ENCODE measurements at regions of chr1 and their contacts with region 1.

Region 1: GRCh38 chr1:207885129-207886032 is 25.5 kb downstream of the CD34 start:
- DNase-seq: peak; percentile 86
- ATAC-seq: peak; percentile 72
- H3K4me3 Mint-ChIP-seq: no peak overlapping the region
- H3K27ac Mint-ChIP-seq: peak overlapping the region; percentile 95
- H3K4me1 Mint-ChIP-seq: peaks cover 30% of the 10 kb centered on the region
- H3K27me3 Mint-ChIP-seq: peaks cover 2% of the 10 kb centered on the region
- CTCF ChIP-seq: peak; percentile 98

Region 2: GRCh38 chr1:207811920-207812720 is 73.3 kb before region 1 on chr1:
- CTCF ChIA-PET with region 1: interaction called, 11 read pairs
- POLR2A ChIA-PET with region 1: no interaction called
- intact Hi-C with region 1: no loop called
- DNase-seq: no peak
- ATAC-seq: peak; percentile 57
- H3K4me3 Mint-ChIP-seq: no peak overlapping the region
- H3K27ac Mint-ChIP-seq: peak overlapping the region; percentile 67
- H3K4me1 Mint-ChIP-seq: peaks cover 60% of the 10 kb centered on the region
- H3K27me3 Mint-ChIP-seq: no peaks in the 10 kb centered on the region
- CTCF ChIP-seq: no peak

Region 3: GRCh38 chr1:207838156-207839082 is 47.0 kb before region 1 on chr1:
- CTCF ChIA-PET with region 1: interaction called, 18 read pairs
- POLR2A ChIA-PET with region 1: interaction called, 14 read pairs
- intact Hi-C with region 1: no loop called
- DNase-seq: no peak
- ATAC-seq: peak; percentile 31
- H3K4me3 Mint-ChIP-seq: no peak overlapping the region
- H3K27ac Mint-ChIP-seq: peak overlapping the region; percentile 73
- H3K4me1 Mint-ChIP-seq: peaks cover 72% of the 10 kb centered on the region
- H3K27me3 Mint-ChIP-seq: no peaks in the 10 kb centered on the region
- CTCF ChIP-seq: no peak

Region 4: GRCh38 chr1:207868774-207869721 is 16.3 kb before region 1 on chr1:
- CTCF ChIA-PET with region 1: interaction called, 285 read pairs
- POLR2A ChIA-PET with region 1: interaction called, 19 read pairs
- intact Hi-C with region 1: no loop called
- DNase-seq: peak; percentile 67
- ATAC-seq: peak; percentile 52
- H3K4me3 Mint-ChIP-seq: peak overlapping the region; percentile 91
- H3K27ac Mint-ChIP-seq: peak overlapping the region; percentile 86
- H3K4me1 Mint-ChIP-seq: peaks cover 84% of the 10 kb centered on the region
- H3K27me3 Mint-ChIP-seq: no peaks in the 10 kb centered on the region
- CTCF ChIP-seq: peak; percentile 81

Region 5: GRCh38 chr1:207910591-207911354 is 25.4 kb after region 1 on chr1 and contains the start of gene CD34:
- CTCF ChIA-PET with region 1: interaction called, 25 read pairs
- POLR2A ChIA-PET with region 1: no interaction called
- intact Hi-C with region 1: no loop called
- DNase-seq: peak; percentile 37
- ATAC-seq: peak; percentile 82
- H3K4me3 Mint-ChIP-seq: peak within 1 kb of the TSS; percentile 45
- H3K27ac Mint-ChIP-seq: no peak within 1 kb of the TSS
- H3K4me1 Mint-ChIP-seq: peaks cover 12% of the 10 kb centered on the region
- H3K27me3 Mint-ChIP-seq: peaks cover 44% of the 10 kb centered on the region
- CTCF ChIP-seq: no peak
- total RNA-seq, gene CD34: 0.04 to 0.05 TPM

Region 6: DNA sequence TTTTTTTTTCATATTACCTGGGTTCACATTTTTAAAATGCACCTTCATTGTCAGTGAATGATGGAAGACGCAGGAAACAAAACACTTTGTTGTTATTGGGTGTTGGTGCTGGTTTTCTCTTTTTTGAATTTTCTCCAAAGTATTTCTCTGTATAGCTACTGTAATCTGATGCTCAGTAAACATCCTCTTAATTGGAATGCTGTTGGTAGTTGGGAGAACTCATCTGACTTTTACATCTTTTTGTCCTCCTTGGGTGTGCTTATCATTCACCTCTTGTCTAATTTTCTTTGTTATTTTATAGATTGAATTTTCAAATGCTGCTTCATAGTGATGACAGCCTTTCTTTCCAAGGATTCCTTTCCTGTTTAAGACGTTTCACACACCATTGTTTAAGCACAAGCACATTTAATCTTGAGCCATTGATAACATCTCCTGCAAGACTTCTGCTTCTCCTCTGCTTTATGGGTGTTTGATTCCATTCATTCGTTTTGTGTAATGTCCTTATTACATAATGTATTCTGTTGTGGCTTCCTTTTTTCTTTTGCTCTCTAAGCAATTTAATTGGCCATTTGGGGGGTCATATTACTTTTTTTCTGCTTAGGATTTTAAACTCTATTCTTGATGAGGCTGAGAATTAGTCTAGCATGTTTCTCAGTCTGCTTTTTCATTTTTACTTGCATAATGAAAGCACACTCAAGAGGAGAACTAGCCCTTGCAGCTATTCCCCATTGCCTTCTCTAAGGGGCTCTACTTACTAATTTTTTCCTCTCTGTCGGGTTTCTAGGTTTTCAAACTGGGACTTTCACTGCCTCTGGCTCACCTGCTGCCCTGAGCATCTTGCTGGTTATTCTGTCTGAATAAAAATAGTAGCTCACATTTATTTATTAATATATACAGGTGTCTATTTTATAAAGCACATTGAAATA is 67.5 kb after region 1 on chr1:
- CTCF ChIA-PET with region 1: interaction called, 253 read pairs
- POLR2A ChIA-PET with region 1: no interaction called
- intact Hi-C with region 1: no loop called
- DNase-seq: no peak
- ATAC-seq: no peak
- H3K4me3 Mint-ChIP-seq: no peak overlapping the region
- H3K27ac Mint-ChIP-seq: no peak overlapping the region
- H3K4me1 Mint-ChIP-seq: no peaks in the 10 kb centered on the region
- H3K27me3 Mint-ChIP-seq: peaks cover 12% of the 10 kb centered on the region
- CTCF ChIP-seq: no peak

Region 7: DNA sequence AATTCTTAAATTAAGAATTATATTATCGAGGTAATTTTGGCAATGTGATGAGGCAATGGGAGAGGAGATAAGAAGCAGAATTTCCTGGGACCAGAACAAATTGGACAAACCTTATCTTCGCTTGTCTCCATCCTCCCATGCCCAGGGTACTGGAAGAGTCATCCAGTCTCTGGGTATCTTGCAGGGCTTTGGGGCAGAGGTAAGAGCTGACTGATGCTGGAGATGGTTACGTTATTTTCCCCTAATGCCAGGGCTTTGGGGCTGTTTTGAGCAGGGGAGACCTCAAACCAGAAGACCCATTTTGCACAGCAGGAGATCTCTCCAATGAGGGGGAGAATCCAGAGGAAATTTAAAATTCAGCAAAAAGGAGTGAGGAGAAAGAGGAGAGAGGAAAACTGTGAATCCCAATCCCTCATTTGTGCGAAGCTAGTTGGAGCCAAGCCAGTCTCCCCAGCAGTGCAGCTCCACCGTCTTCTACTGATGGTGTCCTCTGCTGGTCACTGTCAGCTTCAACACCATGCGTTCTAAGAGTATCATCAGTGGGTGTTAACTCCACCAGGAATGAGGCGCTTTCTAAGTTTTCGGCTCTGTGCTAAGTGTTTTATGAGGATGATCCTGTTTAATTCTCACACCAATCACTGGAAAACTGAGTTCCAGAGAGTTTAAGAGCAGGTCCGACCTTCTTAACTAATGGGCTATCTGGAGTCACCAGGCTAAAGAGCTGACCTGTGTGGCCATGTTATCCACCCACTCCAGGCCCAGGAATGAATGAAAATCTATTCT is 112.3 kb after region 1 on chr1:
- CTCF ChIA-PET with region 1: interaction called, 38 read pairs
- POLR2A ChIA-PET with region 1: no interaction called
- intact Hi-C with region 1: no loop called
- DNase-seq: peak; percentile 70
- ATAC-seq: peak; percentile 88
- H3K4me3 Mint-ChIP-seq: no peak overlapping the region
- H3K27ac Mint-ChIP-seq: no peak overlapping the region
- H3K4me1 Mint-ChIP-seq: no peaks in the 10 kb centered on the region
- H3K27me3 Mint-ChIP-seq: no peaks in the 10 kb centered on the region
- CTCF ChIP-seq: peak; percentile 82